Psoas muscle (tissue), 8 donors: ENCODE measurements at regions of chr3 and their contacts with region 1.

Region 1: DNA sequence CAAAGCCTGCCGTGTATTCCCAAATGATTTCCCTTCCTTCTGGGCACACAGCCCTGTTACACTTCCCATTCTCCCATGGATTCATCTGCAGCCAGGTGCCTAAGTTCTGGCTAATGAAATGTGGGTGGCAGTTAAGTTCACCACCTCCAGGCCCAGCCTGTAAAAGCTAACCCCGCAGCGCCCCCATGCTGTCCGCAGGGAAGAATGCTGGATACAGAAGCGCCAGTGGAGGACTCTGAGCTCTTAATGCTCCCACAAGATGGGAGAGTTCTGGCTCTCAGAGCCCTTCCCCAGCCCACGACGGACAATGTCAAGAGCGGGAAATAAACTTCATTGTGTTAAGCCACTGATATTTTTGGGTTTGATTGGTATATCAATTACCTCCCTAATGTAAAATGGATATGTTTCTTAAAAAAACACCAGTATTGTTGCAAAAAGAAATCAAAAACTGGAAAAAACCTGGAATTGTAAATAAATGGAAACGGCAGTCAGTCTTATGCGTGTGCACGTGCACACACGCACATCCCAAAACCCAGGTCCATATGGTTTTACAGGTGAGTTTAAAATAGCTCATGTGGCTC is 37.7 kb upstream of the FGD5 start:
- DNase-seq: peak; percentile 35 to 62
- ATAC-seq: no peak
- H3K4me3 ChIP-seq: no peak overlapping the region
- H3K27ac ChIP-seq: no peak overlapping the region
- H3K4me1 ChIP-seq: no peaks in the 10 kb centered on the region
- H3K27me3 ChIP-seq: peaks cover 0 to 6% (median 0%) of the 10 kb centered on the region in 3 donors
- CTCF ChIP-seq: peak; percentile 33

Region 2: GRCh38 chr3:14678015-14678503 is 103.0 kb before region 1 on chr3:
- intact Hi-C with region 1: loop called in 1 of 2 experiments (anchors 5 kb)
- DNase-seq: no peak
- ATAC-seq: no peak
- H3K4me3 ChIP-seq: no peak overlapping the region
- H3K27ac ChIP-seq: no peak overlapping the region
- H3K4me1 ChIP-seq: no peaks in the 10 kb centered on the region
- H3K27me3 ChIP-seq: no peaks in the 10 kb centered on the region
- CTCF ChIP-seq: no peak